ENCODE measurements at regions of chr3 and their contacts with region 1.

Region 1: DNA sequence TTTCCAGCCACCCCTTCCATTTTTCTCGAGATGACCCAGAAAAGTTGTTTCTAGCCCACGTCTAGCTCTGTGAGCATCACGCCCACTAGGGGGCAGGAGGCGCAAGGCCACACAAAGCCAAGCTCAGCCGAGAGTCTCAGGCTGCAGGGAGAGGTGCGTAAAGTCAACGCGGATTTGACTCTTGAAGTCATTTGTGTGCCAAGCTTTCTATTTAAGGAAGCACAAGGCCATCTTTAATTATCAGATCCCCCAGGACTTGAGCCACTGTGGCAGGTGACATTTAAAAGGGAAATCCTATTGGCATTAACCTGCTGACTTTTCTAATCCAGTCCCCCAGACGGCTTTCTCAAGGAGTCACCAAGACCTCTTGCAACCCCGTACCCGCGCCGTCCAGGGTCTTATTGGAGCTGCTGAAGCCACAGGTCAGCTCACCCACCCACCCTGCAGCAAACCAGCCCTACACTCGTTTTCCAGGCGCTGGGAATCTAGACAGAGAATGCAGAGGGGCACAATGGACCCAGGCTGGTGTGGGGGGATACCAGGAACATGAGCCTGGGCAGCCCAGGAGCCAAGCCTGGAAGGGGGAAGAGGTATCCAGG is 62.1 kb downstream of the CAPN7 start:
- DNase-seq: peak; percentile 81
- H3K4me3 ChIP-seq: no peak overlapping the region
- CTCF ChIP-seq: peak; percentile 95

Region 2: GRCh38 chr3:15372918-15373317 is 104.8 kb after region 1 on chr3:
- in situ Hi-C with region 1: loop called (anchors 5 kb)
- DNase-seq: no peak
- H3K4me3 ChIP-seq: no peak overlapping the region
- CTCF ChIP-seq: no peak

Region 3: GRCh38 chr3:15527031-15527459 is 258.9 kb after region 1 on chr3:
- in situ Hi-C with region 1: loop called (anchors 25 kb)
- DNase-seq: no peak
- H3K4me3 ChIP-seq: no peak overlapping the region
- CTCF ChIP-seq: peak; percentile 27